Posterior vena cava (tissue), 2 donors: ENCODE measurements at regions of chr10 and their contacts with region 1.

Region 1: DNA sequence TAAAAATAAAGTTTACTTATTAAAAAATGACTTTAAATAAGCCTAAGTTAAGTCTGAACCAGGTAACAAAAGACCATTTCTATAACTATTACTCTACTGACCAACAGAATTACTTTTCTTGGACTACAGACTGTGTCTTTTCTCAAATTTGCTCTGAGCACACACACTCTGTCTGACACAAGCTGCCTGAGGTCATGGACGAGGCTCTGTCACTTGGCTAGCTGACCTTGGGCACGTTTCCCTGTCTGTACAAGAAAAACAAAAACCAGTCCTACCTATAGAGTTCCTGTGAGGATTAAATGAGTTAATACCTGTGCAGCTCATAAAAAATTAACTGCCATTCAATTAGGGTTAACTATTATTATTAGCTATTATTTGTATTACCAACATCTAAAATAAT is 22.9 kb downstream of the ATE1 start:
- DNase-seq: no peak

Region 2: GRCh38 chr10:120942806-120943413 is 962.0 kb before region 1 on chr10:
- intact Hi-C with region 1: loop called in 1 of 2 experiments (anchors 5 kb)
- DNase-seq: peak; percentile 94

Region 3: DNA sequence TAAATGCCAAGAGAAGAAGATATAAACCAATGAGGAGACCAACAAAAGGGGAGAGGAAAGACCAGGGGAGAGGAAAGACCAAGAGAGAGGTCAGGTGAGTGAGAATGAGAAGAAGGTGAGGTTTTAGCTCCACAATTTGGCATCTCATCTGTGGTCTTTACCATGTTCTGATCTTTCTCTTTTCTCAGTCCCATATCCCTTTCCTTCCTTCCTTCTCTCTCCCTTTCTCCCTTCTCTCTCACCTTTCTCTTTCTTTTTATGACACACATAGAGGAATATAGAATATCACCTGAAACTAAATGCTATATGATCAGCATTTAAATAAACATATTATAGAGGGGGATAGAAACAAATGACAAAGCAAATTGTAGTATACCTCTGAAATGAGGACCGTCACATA is 34.5 kb before region 1 on chr10:
- intact Hi-C with region 1: loop called in 1 of 2 experiments (anchors 2 kb)
- DNase-seq: no peak

Region 4: GRCh38 chr10:121880895-121881294 is 24.0 kb before region 1 on chr10:
- intact Hi-C with region 1: no loop called
- DNase-seq: no peak

Region 5: GRCh38 chr10:121974535-121975294 is 69.8 kb after region 1 on chr10 and contains the start of gene NSMCE4A:
- intact Hi-C with region 1: no loop called
- DNase-seq: peak; percentile 94
- total RNA-seq, gene NSMCE4A: 41.2 to 48.0 TPM